ENCODE measurements at regions of chr4 and their contacts with region 1.

Region 1: GRCh38 chr4:184616633-184617551 is 32.4 kb downstream of the CASP3 start:
- DNase-seq: no peak
- ATAC-seq: no peak
- H3K4me3 ChIP-seq: no peak overlapping the region
- H3K27ac ChIP-seq: no peak overlapping the region
- H3K4me1 ChIP-seq: peaks cover 48% of the 10 kb centered on the region
- H3K27me3 ChIP-seq: no peaks in the 10 kb centered on the region
- CTCF ChIP-seq: no peak
- EP300 ChIP-seq: no peak
- POLR2A ChIP-seq: no peak
- RAD21 ChIP-seq: no peak

Region 2: GRCh38 chr4:184544788-184545409 is 72.0 kb before region 1 on chr4:
- CTCF ChIA-PET with region 1: no interaction called
- POLR2A ChIA-PET with region 1: no interaction called
- in situ Hi-C with region 1: no loop called
- intact Hi-C with region 1: loop called (anchors 5 kb)
- DNase-seq: no peak
- ATAC-seq: no peak
- H3K4me3 ChIP-seq: no peak overlapping the region
- H3K27ac ChIP-seq: no peak overlapping the region
- H3K4me1 ChIP-seq: peaks cover 46% of the 10 kb centered on the region
- H3K27me3 ChIP-seq: no peaks in the 10 kb centered on the region
- CTCF ChIP-seq: no peak
- EP300 ChIP-seq: no peak
- POLR2A ChIP-seq: no peak
- RAD21 ChIP-seq: no peak

Region 3: GRCh38 chr4:184896868-184897715 is 280.2 kb after region 1 on chr4:
- CTCF ChIA-PET with region 1: no interaction called
- POLR2A ChIA-PET with region 1: no interaction called
- in situ Hi-C with region 1: no loop called
- intact Hi-C with region 1: no loop called
- DNase-seq: peak; percentile 46
- ATAC-seq: peak; percentile 62
- H3K4me3 ChIP-seq: peak overlapping the region; percentile 18 to 55 (median 46); a peak in 4 of 6 replicates
- H3K27ac ChIP-seq: peak overlapping the region; percentile 40
- H3K4me1 ChIP-seq: peaks cover 53% of the 10 kb centered on the region
- H3K27me3 ChIP-seq: peaks cover 0 to 4% of the 10 kb centered on the region in 2 experiments; a peak in 2 of 5 replicates
- CTCF ChIP-seq: no peak
- EP300 ChIP-seq: peak; percentile 84 to 91
- POLR2A ChIP-seq: no peak
- RAD21 ChIP-seq: no peak

Measured in HepG2 (cell line).